ENCODE measurements at regions of chr14 and their contacts with region 1.

Region 1: DNA sequence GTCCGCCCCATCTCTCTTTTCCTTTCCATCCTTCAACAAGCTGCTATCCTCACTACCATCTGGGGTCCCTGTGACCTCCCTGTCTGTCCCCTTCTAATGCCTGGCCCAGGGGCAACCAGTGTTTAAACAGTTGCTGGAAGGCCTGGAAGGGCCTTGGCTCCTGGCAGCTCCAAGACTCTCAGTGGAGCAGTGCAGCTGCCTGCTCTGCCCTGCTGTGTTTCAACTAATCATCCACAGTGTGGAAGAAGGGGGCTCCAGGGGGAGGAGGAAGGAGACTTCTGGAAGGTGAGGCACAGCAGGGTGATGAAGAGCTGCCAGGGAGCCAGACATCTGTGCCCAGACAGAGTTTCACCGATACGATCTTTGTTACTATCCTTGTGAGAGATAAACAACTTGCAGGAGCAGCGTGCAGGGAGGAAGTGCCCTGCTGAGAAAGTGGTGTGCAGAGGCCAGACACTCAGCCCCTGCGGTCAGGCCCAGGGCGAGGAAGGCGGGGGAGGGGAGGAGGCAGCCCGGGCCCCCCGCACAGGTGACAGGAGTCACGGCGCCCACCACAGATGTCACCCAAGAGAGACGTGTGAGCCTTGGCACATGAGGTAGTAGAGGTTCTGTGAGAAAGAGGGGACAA is 1061.8 kb downstream of the BCL11B start:
- DNase-seq: no peak
- H3K4me3 ChIP-seq: no peak overlapping the region
- H3K27ac ChIP-seq: no peak overlapping the region
- H3K4me1 ChIP-seq: no peaks in the 10 kb centered on the region
- H3K27me3 ChIP-seq: no peaks in the 10 kb centered on the region
- CTCF ChIP-seq: no peak
- POLR2A ChIP-seq: no peak

Region 2: GRCh38 chr14:97866663-97867062 is 343.5 kb before region 1 on chr14:
- intact Hi-C with region 1: loop called (anchors 5 kb)
- DNase-seq: no peak
- H3K4me3 ChIP-seq: no peak overlapping the region
- H3K27ac ChIP-seq: no peak overlapping the region
- H3K4me1 ChIP-seq: no peaks in the 10 kb centered on the region
- H3K27me3 ChIP-seq: no peaks in the 10 kb centered on the region
- CTCF ChIP-seq: no peak
- POLR2A ChIP-seq: no peak

Region 3: DNA sequence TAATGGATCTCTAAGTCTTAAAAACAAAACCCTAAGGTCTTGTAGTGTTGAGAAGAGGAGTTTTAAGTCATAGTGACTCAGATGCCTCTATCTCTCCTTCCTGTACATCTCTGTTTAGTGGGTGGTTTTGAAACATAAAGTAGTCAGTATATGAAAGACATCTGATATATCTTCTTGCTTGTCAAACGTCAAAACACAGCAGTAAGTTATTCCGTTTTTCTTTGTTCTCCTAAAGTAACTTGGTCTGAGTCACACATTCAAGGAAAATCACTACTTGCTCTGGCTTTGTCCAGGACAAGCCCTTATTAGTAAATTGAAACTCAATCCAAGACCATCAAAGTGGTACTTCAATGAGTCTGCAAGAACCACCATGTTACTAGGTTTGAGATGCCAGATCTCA is 110.6 kb before region 1 on chr14:
- intact Hi-C with region 1: no loop called
- DNase-seq: no peak
- H3K4me3 ChIP-seq: no peak overlapping the region
- H3K27ac ChIP-seq: no peak overlapping the region
- H3K4me1 ChIP-seq: no peaks in the 10 kb centered on the region
- H3K27me3 ChIP-seq: no peaks in the 10 kb centered on the region
- CTCF ChIP-seq: no peak
- POLR2A ChIP-seq: no peak

Region 4: DNA sequence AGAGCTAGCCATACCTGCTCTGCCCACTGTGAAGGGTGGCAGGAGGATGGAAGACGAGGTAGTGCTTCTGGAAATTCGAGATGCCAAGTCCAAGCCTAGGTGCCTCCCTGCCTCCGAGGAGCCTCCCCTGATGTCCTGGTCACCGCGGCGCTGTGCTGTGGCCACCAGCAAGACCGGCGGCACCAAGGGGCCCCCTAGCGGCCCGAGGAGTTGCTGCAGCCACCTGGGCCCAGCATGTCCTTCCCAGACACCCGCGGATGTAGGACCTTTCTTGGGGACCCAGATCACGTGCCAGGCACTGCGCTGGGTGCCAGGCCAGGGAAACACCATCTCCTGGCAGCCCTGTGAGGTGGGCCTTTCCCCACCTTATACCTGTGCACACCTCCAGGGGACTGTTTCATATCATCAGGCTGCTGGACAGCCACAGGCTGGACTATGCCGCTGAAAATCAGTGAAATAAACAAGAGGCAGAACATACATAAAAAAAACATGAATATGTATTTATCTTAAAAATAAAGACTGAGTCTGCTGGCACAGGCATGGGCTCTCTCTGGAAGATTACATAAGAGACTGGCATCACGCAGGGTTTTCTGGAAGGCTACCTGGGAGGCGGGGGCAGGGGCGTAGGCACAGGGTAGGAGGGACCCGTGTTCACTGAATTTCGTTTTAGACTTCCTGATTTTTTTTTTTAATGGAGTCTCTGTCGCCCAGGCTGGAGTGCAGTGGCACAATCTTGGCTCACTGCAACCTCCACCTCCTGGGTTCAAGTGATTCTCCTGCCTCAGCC is 1418.9 kb after region 1 on chr14:
- intact Hi-C with region 1: no loop called
- DNase-seq: peak; percentile 75 to 86
- H3K4me3 ChIP-seq: no peak overlapping the region
- H3K27ac ChIP-seq: no peak overlapping the region
- H3K4me1 ChIP-seq: no peaks in the 10 kb centered on the region
- H3K27me3 ChIP-seq: no peaks in the 10 kb centered on the region
- CTCF ChIP-seq: peak; percentile 88 to 98 (median 95)
- POLR2A ChIP-seq: no peak